Activated T-helper 2 cell treated with anti-CD3 and anti-CD28 coated beads, Interferon-gamma antibody, Interleukin-2, Interleukin-4, amounts not matched to agents 10 μg/mL and 5 μg/mL and 100 μg/mL, durations not matched to agents 14 hours and 24 hours and 36 hours (primary cell): ENCODE measurements at regions of chr16 and their contacts with region 1.

Region 1: GRCh38 chr16:9123871-9124270 is 32.4 kb downstream of the HAPSTR1 start:
- DNase-seq: no peak
- H3K4me3 Mint-ChIP-seq: no peak overlapping the region
- H3K27ac Mint-ChIP-seq: no peak overlapping the region
- H3K4me1 Mint-ChIP-seq: peaks cover 35% of the 10 kb centered on the region
- H3K27me3 Mint-ChIP-seq: no peaks in the 10 kb centered on the region

Region 2: GRCh38 chr16:8655184-8655717 is 468.6 kb before region 1 on chr16:
- intact Hi-C with region 1: loop called (anchors 10 kb)
- DNase-seq: peak; percentile 21
- H3K4me3 Mint-ChIP-seq: no peak overlapping the region
- H3K27ac Mint-ChIP-seq: peak overlapping the region; percentile 62
- H3K4me1 Mint-ChIP-seq: peaks cover 14% of the 10 kb centered on the region
- H3K27me3 Mint-ChIP-seq: no peaks in the 10 kb centered on the region

Region 3: GRCh38 chr16:9090960-9091866 is 32.7 kb before region 1 on chr16 and contains the start of gene HAPSTR1:
- intact Hi-C with region 1: loop called (anchors 2 kb)
- DNase-seq: peak; percentile 98
- H3K4me3 Mint-ChIP-seq: peak within 1 kb of the TSS; percentile 98
- H3K27ac Mint-ChIP-seq: peak within 1 kb of the TSS; percentile 95
- H3K4me1 Mint-ChIP-seq: peaks cover 25% of the 10 kb centered on the region
- H3K27me3 Mint-ChIP-seq: no peaks in the 10 kb centered on the region
- total RNA-seq, gene HAPSTR1: 54.5 and 54.9 TPM in 2 replicates

Region 4: GRCh38 chr16:9340526-9341256 is 216.8 kb after region 1 on chr16:
- intact Hi-C with region 1: no loop called
- DNase-seq: no peak
- H3K4me3 Mint-ChIP-seq: no peak overlapping the region
- H3K27ac Mint-ChIP-seq: no peak overlapping the region
- H3K4me1 Mint-ChIP-seq: no peaks in the 10 kb centered on the region
- H3K27me3 Mint-ChIP-seq: no peaks in the 10 kb centered on the region